ENCODE measurements at regions of chr1 and their contacts with region 1.

Region 1: DNA sequence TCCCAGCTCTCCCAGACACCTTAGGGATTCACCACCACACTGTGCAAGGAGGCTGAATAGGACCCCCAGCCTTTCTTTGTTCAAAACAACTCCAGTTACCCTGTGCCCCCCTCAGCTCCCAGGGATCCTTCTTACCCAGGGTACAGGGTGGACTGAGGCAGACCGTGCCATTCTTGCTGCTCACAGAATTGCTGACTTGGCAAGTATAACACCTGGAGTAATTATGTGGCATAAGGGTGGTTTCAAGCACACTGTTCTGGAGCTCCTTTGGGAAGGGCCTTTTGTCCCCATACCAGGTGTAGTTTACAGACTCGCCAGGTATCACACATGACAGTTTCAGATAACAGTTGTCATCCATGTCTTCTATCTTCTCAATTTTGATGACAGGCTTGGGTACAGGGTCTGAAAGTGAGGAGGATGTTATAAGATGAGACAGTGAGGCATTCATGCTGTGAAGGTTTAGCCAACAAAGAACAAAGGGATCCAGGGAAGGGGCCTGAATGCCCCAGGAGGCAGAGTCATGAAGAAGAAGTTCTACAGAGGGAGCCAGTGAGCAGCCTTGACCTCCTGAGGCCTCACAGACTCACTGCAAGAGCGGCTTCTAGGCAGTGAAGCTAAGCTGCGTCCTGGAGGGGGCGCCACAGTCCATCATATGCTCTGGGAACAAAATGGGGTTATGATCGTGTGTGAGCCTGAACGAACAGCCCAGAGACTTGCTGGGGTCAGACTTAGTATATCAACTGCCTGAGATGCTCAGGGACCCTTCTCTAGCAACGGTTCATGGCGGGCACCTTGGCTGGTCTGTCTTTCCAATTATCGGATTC is 30.3 kb downstream of the CD48 start:
- DNase-seq: peak; percentile 83 to 95 (median 88)
- ATAC-seq: peak; percentile 93
- H3K4me3 ChIP-seq: no peak overlapping the region
- H3K4me3 Mint-ChIP-seq: peak overlapping the region; percentile 2
- H3K27ac ChIP-seq: peak overlapping the region; percentile 43 to 53
- H3K27ac Mint-ChIP-seq: peak overlapping the region; percentile 80
- H3K4me1 ChIP-seq: peaks cover 56% of the 10 kb centered on the region
- H3K4me1 Mint-ChIP-seq: peaks cover 52% of the 10 kb centered on the region
- H3K27me3 ChIP-seq: no peaks in the 10 kb centered on the region
- H3K27me3 Mint-ChIP-seq: no peaks in the 10 kb centered on the region
- CTCF ChIP-seq: peak; percentile 82

Region 2: GRCh38 chr1:160704250-160704649 is 23.0 kb after region 1 on chr1:
- CTCF ChIA-PET with region 1: interaction called, 10 read pairs
- POLR2A ChIA-PET with region 1: interaction called, 49 read pairs
- intact Hi-C with region 1: loop called in 1 of 2 experiments (anchors 2 kb)
- DNase-seq: peak in 2 of 14 experiments; percentile 57
- ATAC-seq: no peak
- H3K4me3 ChIP-seq: no peak overlapping the region
- H3K4me3 Mint-ChIP-seq: no peak overlapping the region
- H3K27ac ChIP-seq: peak overlapping the region in 1 of 2 donors; percentile 10
- H3K27ac Mint-ChIP-seq: no peak overlapping the region
- H3K4me1 ChIP-seq: peaks cover 78% of the 10 kb centered on the region
- H3K4me1 Mint-ChIP-seq: peaks cover 18% of the 10 kb centered on the region
- H3K27me3 ChIP-seq: no peaks in the 10 kb centered on the region
- H3K27me3 Mint-ChIP-seq: no peaks in the 10 kb centered on the region
- CTCF ChIP-seq: no peak

Region 3: DNA sequence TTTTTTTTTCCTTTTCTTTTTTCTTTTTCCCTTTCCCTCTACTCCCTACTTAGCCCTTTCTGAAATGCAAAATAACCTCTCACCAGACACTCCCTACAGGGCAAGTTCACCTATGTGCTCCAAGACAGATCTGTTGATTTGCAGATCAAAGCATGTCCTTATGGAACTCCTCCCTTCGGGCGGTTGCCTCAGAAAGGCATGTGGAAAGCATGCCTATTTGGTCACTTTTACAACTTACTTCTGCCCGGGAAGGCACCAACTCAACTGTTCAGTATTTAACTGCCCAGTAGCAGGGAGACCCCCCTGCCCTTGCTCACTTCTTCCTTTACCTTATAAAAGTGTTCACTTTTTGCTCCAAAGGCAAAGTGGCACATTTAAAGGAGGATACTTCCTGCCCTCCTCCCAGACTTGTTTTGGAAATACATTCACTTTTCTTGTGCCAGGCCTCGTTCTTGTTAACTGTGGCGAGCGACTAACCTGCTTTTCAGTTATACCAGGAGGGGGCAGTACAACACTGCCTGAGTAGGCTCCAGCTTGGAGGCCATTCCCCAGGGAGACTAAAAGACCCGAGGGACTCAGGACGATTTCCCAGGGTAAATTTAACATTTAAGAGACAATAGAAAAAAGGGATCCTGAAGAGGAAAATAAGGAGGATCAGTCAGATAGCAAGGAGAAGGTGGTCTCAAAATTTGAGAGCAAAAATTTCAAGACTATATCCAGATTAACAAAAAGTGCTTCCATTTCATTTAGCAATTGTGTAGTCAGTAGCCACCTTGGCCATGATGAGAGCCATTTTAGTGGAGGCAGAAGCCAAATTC is 45.4 kb after region 1 on chr1:
- CTCF ChIA-PET with region 1: interaction called, 13 read pairs
- POLR2A ChIA-PET with region 1: interaction called, 6 read pairs
- intact Hi-C with region 1: loop called (anchors 1 to 5 kb)
- DNase-seq: peak; percentile 24 to 87 (median 52)
- ATAC-seq: peak; percentile 89
- H3K4me3 ChIP-seq: no peak overlapping the region
- H3K4me3 Mint-ChIP-seq: no peak overlapping the region
- H3K27ac ChIP-seq: no peak overlapping the region
- H3K27ac Mint-ChIP-seq: no peak overlapping the region
- H3K4me1 ChIP-seq: peaks cover 16% of the 10 kb centered on the region
- H3K4me1 Mint-ChIP-seq: peaks cover 14% of the 10 kb centered on the region
- H3K27me3 ChIP-seq: no peaks in the 10 kb centered on the region
- H3K27me3 Mint-ChIP-seq: no peaks in the 10 kb centered on the region
- CTCF ChIP-seq: peak; percentile 94

Region 4: GRCh38 chr1:160877221-160877620 is 195.9 kb after region 1 on chr1:
- CTCF ChIA-PET with region 1: interaction called, 4 read pairs
- POLR2A ChIA-PET with region 1: no interaction called
- intact Hi-C with region 1: loop called (anchors 2 kb)
- DNase-seq: peak in 4 of 14 experiments; percentile 15 to 71 (median 70)
- ATAC-seq: peak; percentile 84
- H3K4me3 ChIP-seq: no peak overlapping the region
- H3K4me3 Mint-ChIP-seq: no peak overlapping the region
- H3K27ac ChIP-seq: no peak overlapping the region
- H3K27ac Mint-ChIP-seq: no peak overlapping the region
- H3K4me1 ChIP-seq: peaks cover 12% of the 10 kb centered on the region
- H3K4me1 Mint-ChIP-seq: peaks cover 13% of the 10 kb centered on the region
- H3K27me3 ChIP-seq: no peaks in the 10 kb centered on the region
- H3K27me3 Mint-ChIP-seq: no peaks in the 10 kb centered on the region
- CTCF ChIP-seq: peak; percentile 63

Region 5: GRCh38 chr1:160951443-160952128 is 270.3 kb after region 1 on chr1:
- CTCF ChIA-PET with region 1: interaction called, 26 read pairs
- POLR2A ChIA-PET with region 1: no interaction called
- intact Hi-C with region 1: loop called (anchors 1 kb)
- DNase-seq: peak; percentile 52 to 84 (median 66)
- ATAC-seq: peak; percentile 91
- H3K4me3 ChIP-seq: no peak overlapping the region
- H3K4me3 Mint-ChIP-seq: no peak overlapping the region
- H3K27ac ChIP-seq: no peak overlapping the region
- H3K27ac Mint-ChIP-seq: no peak overlapping the region
- H3K4me1 ChIP-seq: peaks cover 10% of the 10 kb centered on the region
- H3K4me1 Mint-ChIP-seq: peaks cover 12% of the 10 kb centered on the region
- H3K27me3 ChIP-seq: no peaks in the 10 kb centered on the region
- H3K27me3 Mint-ChIP-seq: no peaks in the 10 kb centered on the region
- CTCF ChIP-seq: peak; percentile 68